ENCODE measurements at regions of chr11 and their contacts with region 1.

Region 1: GRCh38 chr11:17354601-17354991 is 3.0 kb downstream of the NCR3LG1 start:
- DNase-seq: no peak

Region 2: DNA sequence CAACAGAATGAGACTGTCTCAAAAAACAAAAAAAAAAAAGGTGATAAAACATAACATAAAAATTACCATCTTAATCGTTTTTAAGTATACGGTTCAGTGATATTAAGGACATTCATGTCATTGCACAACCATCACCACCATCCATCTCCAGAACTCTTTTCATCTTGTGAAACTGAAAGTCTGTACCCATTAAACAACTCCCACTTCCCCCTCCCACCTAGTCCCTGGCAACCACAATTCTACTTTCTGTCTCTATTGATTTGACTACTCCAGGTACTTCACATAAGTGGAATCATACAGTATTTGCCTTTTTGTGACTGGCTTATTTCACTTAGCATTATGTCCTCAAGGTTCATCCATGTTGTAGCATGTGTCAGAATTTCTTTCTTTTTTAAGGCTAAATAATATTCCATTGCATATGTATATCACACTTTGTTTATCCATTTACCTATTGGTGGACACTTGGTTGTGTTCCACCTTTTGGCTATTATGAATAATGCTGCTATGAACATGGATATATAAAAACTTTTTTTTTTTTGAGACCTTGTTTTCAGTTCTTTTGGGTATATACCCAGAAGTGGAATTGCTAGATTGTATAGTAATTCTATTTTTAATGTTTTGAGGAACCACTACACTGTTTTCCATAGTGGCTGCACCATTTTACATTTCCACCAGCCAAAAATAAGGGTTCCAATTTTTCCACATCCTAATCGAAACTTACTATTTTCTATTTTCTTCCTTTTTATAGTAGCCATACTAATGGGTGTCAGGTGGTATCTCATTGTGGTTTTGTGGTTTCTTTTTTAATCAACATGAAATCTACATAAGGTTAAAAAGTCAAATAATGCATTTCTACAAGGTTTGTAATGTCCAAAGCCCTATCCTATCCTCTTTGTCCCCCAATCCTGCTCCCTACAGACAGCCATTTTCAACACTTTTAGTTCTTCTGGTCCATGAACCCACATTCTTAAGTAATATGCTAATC is 123.4 kb before region 1 on chr11:
- intact Hi-C with region 1: loop called (anchors 5 kb)
- DNase-seq: no peak

Region 3: DNA sequence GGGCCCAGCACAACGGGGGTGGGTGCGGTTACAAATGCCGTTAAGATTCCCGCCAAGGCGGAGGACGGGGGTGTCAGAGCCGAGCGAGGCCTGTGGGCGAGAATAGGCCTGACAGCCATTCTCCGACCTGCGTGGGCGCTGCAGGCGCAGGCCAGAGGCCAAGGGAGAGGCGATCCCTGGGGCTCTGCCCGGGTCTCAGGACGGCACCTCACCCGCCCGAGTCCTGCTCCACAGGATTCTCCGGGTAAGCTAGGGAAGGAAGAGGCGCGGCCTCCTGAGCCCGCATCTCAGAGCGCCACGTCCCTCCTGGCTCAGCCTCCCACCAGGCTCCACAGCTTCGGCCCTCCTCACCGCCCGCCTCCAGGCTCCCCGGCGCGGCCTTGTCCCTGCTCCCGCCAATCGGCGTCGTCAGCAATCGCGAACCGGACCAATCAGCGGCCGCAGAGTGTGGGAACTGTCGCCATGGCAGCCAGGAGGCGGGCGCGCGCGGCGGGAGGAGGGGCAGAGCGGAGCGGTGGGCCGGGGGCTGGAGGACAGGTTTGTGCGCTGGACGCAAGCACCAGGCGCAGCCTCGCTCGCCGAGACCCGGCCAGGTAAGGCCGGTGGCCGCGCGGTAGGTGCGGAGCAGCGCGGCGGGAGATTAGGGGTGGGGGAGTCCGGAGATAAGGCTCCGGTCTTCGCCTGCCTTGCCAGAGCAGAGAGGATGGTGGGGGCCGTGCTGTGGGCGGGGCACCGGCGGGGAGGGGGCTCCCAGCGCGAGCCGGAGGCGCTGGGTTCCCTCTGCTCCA is 78.2 kb before region 1 on chr11 and contains the start of gene NUCB2:
- intact Hi-C with region 1: loop called (anchors 5 kb)
- DNase-seq: peak; percentile 99
- total RNA-seq, gene NUCB2: 91.6 TPM

Measured in cardiac septum (tissue), 1 donor.